Posterior cingulate gyrus (tissue), 11 donors: ENCODE measurements at regions of chr18 and their contacts with region 1.

Region 1: DNA sequence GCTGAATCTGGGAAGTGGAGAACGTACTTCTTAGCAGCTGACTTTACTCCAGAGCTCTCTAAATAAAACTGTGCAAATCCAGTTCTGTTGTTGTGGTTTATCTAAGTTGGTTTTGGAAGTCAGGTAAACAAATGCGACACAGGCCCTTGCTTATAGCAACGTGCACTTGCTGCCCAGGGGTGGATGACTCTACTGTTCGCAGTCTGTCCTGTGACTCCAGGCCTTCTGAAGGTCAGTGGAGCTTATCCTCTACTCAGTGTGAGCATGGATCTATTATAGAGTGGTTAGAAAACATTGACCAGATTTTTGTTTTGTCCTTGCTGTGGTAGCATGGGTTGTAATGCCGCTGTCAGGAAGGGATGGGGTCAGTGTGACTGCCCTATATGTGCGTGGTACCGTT is 89.1 kb downstream of the ZNF236 start:
- DNase-seq: no peak

Region 2: DNA sequence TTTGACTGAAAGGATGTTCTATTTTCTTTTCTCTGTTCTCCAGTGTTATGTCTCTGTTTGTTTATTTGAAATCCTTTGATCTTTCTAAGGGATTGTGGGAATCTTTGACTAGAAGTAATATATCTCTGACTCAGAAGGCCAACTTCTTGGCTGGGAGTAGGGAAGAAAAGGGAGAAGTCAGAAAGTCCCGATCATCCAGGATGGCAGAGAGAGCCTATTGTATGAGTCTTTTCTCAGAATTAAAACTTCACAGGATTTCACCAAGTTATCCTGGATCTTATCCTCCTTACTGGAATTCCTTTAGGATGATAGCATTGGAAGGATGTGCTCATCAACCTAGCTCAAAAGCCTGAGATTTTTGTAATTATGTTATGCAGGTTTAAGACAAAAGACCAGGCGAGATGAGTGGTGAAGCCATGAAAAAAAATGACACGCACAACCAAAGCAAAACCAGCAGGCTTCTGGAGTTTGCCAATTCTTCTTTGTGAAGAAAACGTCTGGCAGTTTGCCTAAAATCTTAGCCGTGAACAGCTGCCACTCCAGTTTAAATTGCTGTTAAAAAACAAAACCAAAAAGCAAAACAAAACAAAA is 1100.4 kb before region 1 on chr18:
- intact Hi-C with region 1: no loop called
- DNase-seq: no peak

Region 3: GRCh38 chr18:76897257-76897656 is 14.2 kb before region 1 on chr18:
- intact Hi-C with region 1: loop called (anchors 1 kb)
- DNase-seq: no peak

Region 4: DNA sequence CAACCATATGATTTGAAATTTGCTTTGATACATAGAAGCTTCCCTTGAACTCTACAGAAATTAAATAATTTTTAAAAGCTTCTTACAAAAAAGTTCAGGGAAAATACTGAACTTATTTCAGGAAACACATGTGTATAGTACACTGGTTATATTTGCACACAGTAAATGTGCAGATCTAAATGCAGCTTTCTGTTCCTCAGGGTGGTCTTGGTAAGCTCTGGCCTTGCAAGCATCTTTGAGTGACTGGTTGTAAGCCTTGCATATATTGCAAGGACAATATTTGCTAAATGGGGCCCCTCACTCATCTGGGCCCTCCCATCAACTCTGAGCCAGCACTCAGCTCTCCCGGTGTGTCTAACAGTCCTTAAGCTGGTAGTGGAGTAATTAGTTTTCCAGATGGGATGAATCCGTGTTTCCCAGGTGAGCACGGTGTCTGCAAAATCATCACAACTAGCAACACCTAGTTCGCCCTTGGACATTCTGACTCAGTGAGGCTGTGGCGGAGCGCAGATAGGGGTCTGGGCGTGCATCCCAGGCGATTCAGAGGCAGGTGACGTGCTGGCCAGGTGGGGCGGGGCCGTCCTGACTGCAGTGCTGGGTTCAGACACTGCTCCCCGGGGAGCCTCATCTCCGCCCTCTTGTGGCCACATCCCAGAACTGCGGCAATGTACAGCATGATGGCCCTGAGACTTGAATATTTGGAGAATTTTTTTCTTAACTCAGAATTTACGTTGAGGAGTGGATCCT is 71.6 kb after region 1 on chr18:
- intact Hi-C with region 1: no loop called
- DNase-seq: peak; percentile 69 to 97 (median 86)

Region 5: GRCh38 chr18:77487951-77488740 is 576.7 kb after region 1 on chr18:
- intact Hi-C with region 1: no loop called
- DNase-seq: no peak

Region 6: DNA sequence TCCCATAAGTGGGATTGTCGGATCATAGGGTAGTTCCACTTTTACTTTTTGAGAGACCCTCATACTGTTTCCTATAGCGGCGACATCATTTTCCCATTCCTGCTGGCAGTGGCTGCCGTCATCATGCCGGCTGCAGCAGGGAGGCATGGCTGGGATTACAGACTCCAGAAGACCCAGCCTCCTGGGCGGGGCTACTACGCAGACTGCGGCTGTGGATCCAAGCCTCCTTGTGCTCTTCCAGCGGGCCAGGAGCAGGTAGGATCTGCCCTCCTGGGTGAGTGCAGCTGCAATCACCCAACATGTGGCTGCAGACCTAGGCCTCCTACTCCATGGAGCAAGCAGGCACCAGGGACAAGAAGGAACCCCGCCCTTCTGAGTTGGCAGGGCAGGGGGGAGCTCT is 697.4 kb after region 1 on chr18:
- intact Hi-C with region 1: no loop called
- DNase-seq: no peak